GM12878 (cell line): ENCODE measurements at regions of chr15 and their contacts with region 1.

Region 1: GRCh38 chr15:64731012-64731806 is 44.2 kb downstream of the RBPMS2 start:
- DNase-seq: peak; percentile 36
- ATAC-seq: peak; percentile 91
- H3K4me3 ChIP-seq: no peak overlapping the region
- H3K27ac ChIP-seq: no peak overlapping the region
- H3K4me1 ChIP-seq: peaks cover 11% of the 10 kb centered on the region
- H3K27me3 ChIP-seq: no peaks in the 10 kb centered on the region; a peak in 1 of 4 replicates
- CTCF ChIP-seq: peak; percentile 85 to 96 (median 86)
- EP300 ChIP-seq: no peak
- POLR2A ChIP-seq: no peak
- RAD21 ChIP-seq: peak; percentile 98

Region 2: DNA sequence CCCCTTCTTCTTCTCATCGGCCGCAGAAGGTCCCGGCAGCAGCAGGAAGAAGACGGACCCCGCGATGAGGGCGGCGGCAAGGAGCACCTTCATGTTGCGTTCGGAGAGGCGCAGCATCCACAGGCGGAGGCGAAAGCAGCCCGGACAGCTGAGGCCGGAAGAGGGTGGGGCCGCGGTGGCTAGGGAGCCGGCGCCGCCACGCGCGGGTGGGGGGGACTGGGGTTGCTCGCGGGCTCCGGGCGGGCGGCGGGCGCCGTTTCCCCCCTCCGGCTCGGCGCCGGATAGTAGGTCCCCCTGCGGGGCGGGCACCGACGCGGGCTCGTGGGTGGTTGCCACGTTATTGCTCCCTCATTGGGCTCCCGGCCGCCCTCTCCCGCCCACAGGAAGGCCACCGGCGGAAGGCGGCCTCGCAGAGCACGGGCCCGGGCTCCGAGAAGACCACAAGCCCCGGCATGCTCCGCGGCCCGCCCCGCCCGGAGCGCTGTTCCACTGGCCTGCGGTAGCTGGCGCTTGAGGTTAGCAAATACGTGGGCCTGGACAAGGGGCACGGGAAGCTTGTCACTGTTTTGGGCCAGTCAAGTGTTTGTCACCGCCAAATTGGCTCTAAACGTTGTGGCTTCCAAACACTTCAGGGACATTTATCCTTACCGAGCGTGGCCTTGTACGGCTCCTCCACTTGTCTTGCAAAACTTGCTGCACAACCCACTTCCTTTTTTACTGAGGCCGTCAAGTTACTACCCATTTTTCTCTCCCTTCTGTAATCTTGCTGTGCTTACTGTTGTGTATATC is 568.1 kb before region 1 on chr15 and contains the start of gene PPIB:
- CTCF ChIA-PET with region 1: interaction called, 12 read pairs
- POLR2A ChIA-PET with region 1: no interaction called
- RAD21 ChIA-PET with region 1: interaction called, 6 read pairs
- SMC1A ChIA-PET with region 1: interaction called, 9 read pairs
- in situ Hi-C with region 1: no loop called
- intact Hi-C with region 1: no loop called
- DNase-seq: peak; percentile 91
- ATAC-seq: peak; percentile 95
- H3K4me3 ChIP-seq: peak within 1 kb of the TSS; percentile 84
- H3K27ac ChIP-seq: peak within 1 kb of the TSS; percentile 81
- H3K4me1 ChIP-seq: peaks cover 30% of the 10 kb centered on the region
- H3K27me3 ChIP-seq: no peaks in the 10 kb centered on the region
- CTCF ChIP-seq: peak; percentile 47 to 73 (median 54)
- EP300 ChIP-seq: no peak
- POLR2A ChIP-seq: peak; percentile 99
- RAD21 ChIP-seq: peak; percentile 67
- polyA plus RNA-seq, gene PPIB: 831 to 858 TPM

Region 3: GRCh38 chr15:64423970-64424369 is 307.2 kb before region 1 on chr15:
- CTCF ChIA-PET with region 1: interaction called, 64 read pairs
- POLR2A ChIA-PET with region 1: no interaction called
- RAD21 ChIA-PET with region 1: interaction called, 22 read pairs
- SMC1A ChIA-PET with region 1: interaction called, 33 read pairs
- in situ Hi-C with region 1: no loop called
- intact Hi-C with region 1: loop called (anchors 2 kb)
- DNase-seq: peak; percentile 25
- ATAC-seq: peak; percentile 82
- H3K4me3 ChIP-seq: peak overlapping the region; percentile 16; the same call in 1 of the 2 replicates
- H3K27ac ChIP-seq: peak overlapping the region; percentile 62
- H3K4me1 ChIP-seq: peaks cover 14% of the 10 kb centered on the region
- H3K27me3 ChIP-seq: no peaks in the 10 kb centered on the region
- CTCF ChIP-seq: no peak
- EP300 ChIP-seq: peak; percentile 79 to 90; a peak in 3 of 4 replicates
- POLR2A ChIP-seq: no peak
- RAD21 ChIP-seq: no peak

Region 4: GRCh38 chr15:64681424-64682024 is 49.7 kb before region 1 on chr15:
- CTCF ChIA-PET with region 1: interaction called, 267 read pairs
- POLR2A ChIA-PET with region 1: interaction called, 5 read pairs
- RAD21 ChIA-PET with region 1: interaction called, 94 read pairs
- SMC1A ChIA-PET with region 1: interaction called, 96 read pairs
- in situ Hi-C with region 1: loop called (anchors 5 kb)
- intact Hi-C with region 1: loop called (anchors 1 kb)
- DNase-seq: no peak
- ATAC-seq: peak; percentile 80
- H3K4me3 ChIP-seq: no peak overlapping the region
- H3K27ac ChIP-seq: no peak overlapping the region
- H3K4me1 ChIP-seq: no peaks in the 10 kb centered on the region
- H3K27me3 ChIP-seq: no peaks in the 10 kb centered on the region
- CTCF ChIP-seq: peak; percentile 47 to 82 (median 51); a peak in 4 of 6 replicates
- EP300 ChIP-seq: no peak
- POLR2A ChIP-seq: no peak
- RAD21 ChIP-seq: peak; percentile 70

Region 5: GRCh38 chr15:64699751-64700388 is 31.3 kb before region 1 on chr15:
- CTCF ChIA-PET with region 1: interaction called, 267 read pairs
- POLR2A ChIA-PET with region 1: interaction called, 3 read pairs
- RAD21 ChIA-PET with region 1: interaction called, 41 read pairs
- SMC1A ChIA-PET with region 1: interaction called, 25 read pairs
- in situ Hi-C with region 1: no loop called
- intact Hi-C with region 1: no loop called
- DNase-seq: no peak
- ATAC-seq: no peak
- H3K4me3 ChIP-seq: peak overlapping the region; percentile 94; the same call in 1 of the 2 replicates
- H3K27ac ChIP-seq: peak overlapping the region; percentile 25; the same call in 1 of the 2 replicates
- H3K4me1 ChIP-seq: peaks cover 38% of the 10 kb centered on the region
- H3K27me3 ChIP-seq: no peaks in the 10 kb centered on the region
- CTCF ChIP-seq: no peak
- EP300 ChIP-seq: no peak
- POLR2A ChIP-seq: no peak
- RAD21 ChIP-seq: no peak

Region 6: DNA sequence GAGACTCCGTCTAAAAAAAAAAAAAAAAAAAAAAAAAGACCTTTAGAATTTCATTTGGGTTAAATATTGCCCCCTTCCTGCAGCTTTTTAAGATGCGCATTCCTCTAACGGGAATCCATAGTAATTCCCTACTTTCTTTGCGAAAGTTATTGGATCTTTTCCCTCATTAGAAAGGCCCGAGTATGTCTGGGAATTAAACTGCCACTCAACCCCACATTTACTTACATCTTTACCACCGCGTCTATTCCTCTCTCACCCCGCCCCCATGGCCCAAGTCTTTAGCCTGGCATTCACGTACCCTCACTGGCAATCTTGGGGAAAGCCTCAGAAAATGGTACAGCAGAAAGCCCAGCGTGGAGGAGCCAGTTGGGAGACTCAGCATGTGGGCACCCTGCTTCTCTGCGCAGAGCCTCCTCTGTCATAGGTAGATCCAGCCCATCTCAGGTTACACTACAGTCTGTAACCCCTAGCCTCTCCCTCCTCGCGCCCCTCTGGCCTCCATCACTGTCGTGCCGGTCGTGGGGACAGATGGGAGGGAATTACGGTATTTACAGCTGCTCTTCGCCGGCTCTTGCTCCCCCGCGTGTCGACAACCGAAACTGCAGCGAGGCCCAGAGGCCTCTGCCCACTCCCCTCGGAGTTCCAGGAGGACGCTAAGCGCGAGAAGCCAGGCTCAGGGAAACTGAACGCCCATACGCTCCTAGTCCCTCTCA is 174.1 kb after region 1 on chr15:
- CTCF ChIA-PET with region 1: interaction called, 32 read pairs
- POLR2A ChIA-PET with region 1: no interaction called
- RAD21 ChIA-PET with region 1: interaction called, 5 read pairs
- SMC1A ChIA-PET with region 1: interaction called, 31 read pairs
- in situ Hi-C with region 1: loop called (anchors 5 kb)
- intact Hi-C with region 1: loop called (anchors 1 kb)
- DNase-seq: no peak
- ATAC-seq: peak; percentile 98
- H3K4me3 ChIP-seq: peak overlapping the region; percentile 46; the same call in 1 of the 2 replicates
- H3K27ac ChIP-seq: 0 out of 2 replicates have a peak overlapping the region, but pooled peaks have one; percentile 20
- H3K4me1 ChIP-seq: peaks cover 13% of the 10 kb centered on the region
- H3K27me3 ChIP-seq: no peaks in the 10 kb centered on the region
- CTCF ChIP-seq: peak; percentile 87 to 91 (median 88)
- EP300 ChIP-seq: no peak
- POLR2A ChIP-seq: peak; percentile 24; the same call in 1 of the 2 replicates
- RAD21 ChIP-seq: peak; percentile 86

Region 7: GRCh38 chr15:65028921-65029735 is 297.9 kb after region 1 on chr15 and contains the start of gene MTFMT:
- CTCF ChIA-PET with region 1: interaction called, 3 read pairs
- POLR2A ChIA-PET with region 1: no interaction called
- RAD21 ChIA-PET with region 1: no interaction called
- SMC1A ChIA-PET with region 1: interaction called, 5 read pairs
- in situ Hi-C with region 1: no loop called
- intact Hi-C with region 1: loop called (anchors 5 kb)
- DNase-seq: no peak
- ATAC-seq: peak; percentile 96
- H3K4me3 ChIP-seq: peak within 1 kb of the TSS; percentile 95
- H3K27ac ChIP-seq: peak within 1 kb of the TSS; percentile 60
- H3K4me1 ChIP-seq: peaks cover 11% of the 10 kb centered on the region
- H3K27me3 ChIP-seq: no peaks in the 10 kb centered on the region
- CTCF ChIP-seq: no peak
- EP300 ChIP-seq: no peak
- POLR2A ChIP-seq: peak; percentile 94
- RAD21 ChIP-seq: no peak
- polyA plus RNA-seq, gene MTFMT: 1.7 to 3.3 TPM